Caco-2 (cell line): ENCODE measurements at regions of chr6 and their contacts with region 1.

Region 1: DNA sequence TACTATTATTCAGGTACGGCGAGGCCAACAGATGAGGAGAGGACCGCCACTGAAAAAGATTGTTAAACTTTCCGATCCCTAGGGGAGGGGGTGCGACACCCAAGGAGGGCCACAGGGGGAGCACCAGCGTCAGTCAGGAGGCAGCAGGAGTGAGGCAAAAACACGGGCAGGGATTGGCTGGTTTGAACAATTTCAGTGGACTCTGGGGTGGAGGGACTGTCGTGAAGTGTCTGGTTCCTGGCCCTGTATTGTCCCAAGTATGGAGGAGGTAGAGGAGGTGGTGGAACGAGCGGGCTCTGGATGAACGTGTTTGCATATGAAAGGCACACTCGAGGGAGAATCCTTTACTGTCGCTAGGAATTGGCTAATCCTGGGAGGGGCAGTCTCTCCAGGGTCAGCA is 32.5 kb upstream of the MCUR1 start:
- DNase-seq: peak in 1 of 2 experiments; percentile 26
- H3K4me3 ChIP-seq: no peak overlapping the region
- H3K4me3 Mint-ChIP-seq: no peak overlapping the region
- H3K27ac Mint-ChIP-seq: peak overlapping the region; percentile 31
- H3K4me1 ChIP-seq: peaks cover 37% of the 10 kb centered on the region
- H3K4me1 Mint-ChIP-seq: peaks cover 36% of the 10 kb centered on the region
- H3K27me3 ChIP-seq: no peaks in the 10 kb centered on the region
- H3K27me3 Mint-ChIP-seq: no peaks in the 10 kb centered on the region
- CTCF ChIP-seq: peak in 1 of 2 experiments; percentile 3

Region 2: DNA sequence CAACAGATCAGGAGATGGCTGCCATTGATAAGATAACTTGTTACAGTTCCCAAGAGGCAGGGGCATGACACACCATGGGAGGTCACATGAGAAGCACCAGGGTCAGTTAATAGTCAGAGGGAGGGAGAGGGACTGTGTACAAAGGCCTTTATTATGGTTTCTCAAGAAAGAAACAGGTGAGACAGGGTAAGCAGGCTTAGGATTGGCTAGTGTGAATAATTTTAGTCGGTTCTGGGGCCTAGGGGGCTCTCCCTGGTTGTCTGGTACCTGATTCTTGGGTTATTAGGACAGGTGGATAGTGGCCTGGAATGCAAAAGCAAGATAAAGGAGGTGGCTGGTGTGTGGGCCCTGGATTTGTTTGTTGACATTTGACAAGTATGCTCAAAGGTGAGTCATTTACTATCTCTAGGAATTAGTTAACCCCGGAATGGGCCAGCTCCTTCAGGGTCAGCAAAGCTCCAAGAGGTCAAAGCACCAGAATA is 16.9 kb after region 1 on chr6:
- CTCF ChIA-PET with region 1: no interaction called
- POLR2A ChIA-PET with region 1: no interaction called
- intact Hi-C with region 1: loop called (anchors 2 kb)
- DNase-seq: peak; percentile 95 to 96
- H3K4me3 ChIP-seq: no peak overlapping the region
- H3K4me3 Mint-ChIP-seq: peak overlapping the region; percentile 8
- H3K27ac Mint-ChIP-seq: peak overlapping the region; percentile 29
- H3K4me1 ChIP-seq: peaks cover 30% of the 10 kb centered on the region
- H3K4me1 Mint-ChIP-seq: peaks cover 16% of the 10 kb centered on the region
- H3K27me3 ChIP-seq: no peaks in the 10 kb centered on the region
- H3K27me3 Mint-ChIP-seq: no peaks in the 10 kb centered on the region
- CTCF ChIP-seq: no peak

Region 3: GRCh38 chr6:13873285-13874190 is 26.7 kb after region 1 on chr6:
- CTCF ChIA-PET with region 1: interaction called, 6 read pairs
- POLR2A ChIA-PET with region 1: interaction called, 4 read pairs
- intact Hi-C with region 1: loop called (anchors 1 kb)
- DNase-seq: peak; percentile 94 to 96
- H3K4me3 ChIP-seq: peak overlapping the region; percentile 53
- H3K4me3 Mint-ChIP-seq: peak overlapping the region; percentile 75
- H3K27ac Mint-ChIP-seq: peak overlapping the region; percentile 99
- H3K4me1 ChIP-seq: peaks cover 17% of the 10 kb centered on the region
- H3K4me1 Mint-ChIP-seq: peaks cover 14% of the 10 kb centered on the region
- H3K27me3 ChIP-seq: no peaks in the 10 kb centered on the region
- H3K27me3 Mint-ChIP-seq: no peaks in the 10 kb centered on the region
- CTCF ChIP-seq: peak; percentile 84 to 98

Region 4: GRCh38 chr6:13953061-13953705 is 106.3 kb after region 1 on chr6:
- CTCF ChIA-PET with region 1: no interaction called
- POLR2A ChIA-PET with region 1: no interaction called
- intact Hi-C with region 1: no loop called
- DNase-seq: no peak
- H3K4me3 ChIP-seq: no peak overlapping the region
- H3K4me3 Mint-ChIP-seq: no peak overlapping the region
- H3K27ac Mint-ChIP-seq: no peak overlapping the region
- H3K4me1 ChIP-seq: no peaks in the 10 kb centered on the region
- H3K4me1 Mint-ChIP-seq: no peaks in the 10 kb centered on the region
- H3K27me3 ChIP-seq: no peaks in the 10 kb centered on the region
- H3K27me3 Mint-ChIP-seq: peaks cover 6% of the 10 kb centered on the region
- CTCF ChIP-seq: no peak